ENCODE measurements at regions of chr15 and their contacts with region 1.

Region 1: GRCh38 chr15:72464251-72464650 is 9.9 kb upstream of the ARIH1 start:
- DNase-seq: no peak
- ATAC-seq: no peak
- H3K4me3 ChIP-seq: peak overlapping the region in 1 of 12 donors; percentile 18
- H3K27ac ChIP-seq: peak overlapping the region in 1 of 12 donors; percentile 55
- H3K4me1 ChIP-seq: peaks cover 0 to 20% (median 2%) of the 10 kb centered on the region in 12 donors
- H3K27me3 ChIP-seq: no peaks in the 10 kb centered on the region
- CTCF ChIP-seq: no peak
- POLR2A ChIP-seq: no peak

Region 2: DNA sequence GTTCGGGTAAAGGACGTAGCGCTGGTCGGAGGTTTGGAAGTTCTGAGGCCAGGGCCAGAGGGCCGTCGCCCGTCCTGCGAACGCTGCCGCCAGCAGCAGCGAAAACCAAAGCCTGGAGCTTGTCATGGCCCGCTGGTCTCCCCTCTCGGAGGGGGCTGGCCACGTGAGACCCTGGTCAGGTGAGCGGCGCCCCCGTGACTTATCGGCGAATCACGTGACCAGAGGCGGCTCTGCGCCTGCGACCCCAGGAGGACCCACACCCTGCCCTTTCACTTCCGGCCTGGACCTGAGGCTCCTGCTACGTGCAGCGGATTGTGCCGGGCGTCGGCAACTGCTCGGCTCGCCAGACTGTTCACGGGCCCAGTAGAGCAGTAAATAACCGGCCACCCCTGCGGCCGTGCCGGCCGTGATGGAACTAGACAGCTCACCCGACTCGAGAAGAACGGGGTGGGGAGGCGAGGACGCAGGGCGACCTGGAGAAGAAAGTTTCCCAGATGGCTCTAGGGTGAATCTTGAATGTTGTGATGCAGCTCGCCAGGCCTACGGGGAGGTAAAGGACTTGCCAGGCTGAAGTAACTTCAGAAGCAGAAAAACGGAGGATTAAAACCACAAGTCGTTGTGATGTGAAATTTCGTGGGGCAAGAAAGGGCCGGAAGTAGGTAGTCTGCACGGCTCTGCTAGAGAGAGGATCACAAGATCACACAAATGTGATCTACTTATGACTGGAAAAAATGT is 88.2 kb before region 1 on chr15 and contains the start of gene HEXA:
- intact Hi-C with region 1: loop called in 1 of 10 experiments (anchors 5 kb)
- DNase-seq: peak; percentile 98 to 99 (median 98)
- ATAC-seq: peak; percentile 95 to 97 (median 97)
- H3K4me3 ChIP-seq: peak within 1 kb of the TSS; percentile 57 to 98 (median 83)
- H3K27ac ChIP-seq: peak within 1 kb of the TSS; percentile 53 to 97 (median 91)
- H3K4me1 ChIP-seq: peaks cover 0 to 65% (median 22%) of the 10 kb centered on the region in 12 donors
- H3K27me3 ChIP-seq: no peaks in the 10 kb centered on the region
- CTCF ChIP-seq: no peak
- POLR2A ChIP-seq: peak in 1 of 2 donors; percentile 80
- total RNA-seq, gene HEXA: 40.8 to 181 (median 74.4) TPM

Region 3: DNA sequence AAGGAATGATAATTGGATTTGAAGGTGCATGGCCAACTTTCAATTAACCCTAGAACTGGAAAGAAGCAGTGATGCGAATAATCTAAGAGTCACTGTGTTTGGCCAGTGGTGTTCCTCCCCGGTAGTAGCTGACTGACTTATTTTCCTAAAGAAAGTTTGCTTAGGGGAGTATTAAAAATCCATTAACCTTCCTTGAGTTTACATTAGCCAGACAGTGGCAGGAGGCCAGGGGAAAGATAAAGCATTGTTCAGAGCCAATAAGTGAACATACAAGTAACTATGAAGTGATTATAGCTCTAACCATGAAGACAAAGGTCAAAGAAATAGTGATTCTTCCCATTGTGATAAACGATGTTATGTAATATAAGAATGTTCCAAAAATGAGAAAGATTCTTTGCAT is 75.0 kb before region 1 on chr15:
- intact Hi-C with region 1: loop called in 1 of 10 experiments (anchors 5 kb)
- DNase-seq: no peak
- ATAC-seq: no peak
- H3K4me3 ChIP-seq: no peak overlapping the region
- H3K27ac ChIP-seq: no peak overlapping the region
- H3K4me1 ChIP-seq: no peaks in the 10 kb centered on the region
- H3K27me3 ChIP-seq: peaks cover 0 to 16% (median 0%) of the 10 kb centered on the region in 9 donors
- CTCF ChIP-seq: no peak
- POLR2A ChIP-seq: no peak